ENCODE measurements at regions of chr3 and their contacts with region 1.

Region 1: DNA sequence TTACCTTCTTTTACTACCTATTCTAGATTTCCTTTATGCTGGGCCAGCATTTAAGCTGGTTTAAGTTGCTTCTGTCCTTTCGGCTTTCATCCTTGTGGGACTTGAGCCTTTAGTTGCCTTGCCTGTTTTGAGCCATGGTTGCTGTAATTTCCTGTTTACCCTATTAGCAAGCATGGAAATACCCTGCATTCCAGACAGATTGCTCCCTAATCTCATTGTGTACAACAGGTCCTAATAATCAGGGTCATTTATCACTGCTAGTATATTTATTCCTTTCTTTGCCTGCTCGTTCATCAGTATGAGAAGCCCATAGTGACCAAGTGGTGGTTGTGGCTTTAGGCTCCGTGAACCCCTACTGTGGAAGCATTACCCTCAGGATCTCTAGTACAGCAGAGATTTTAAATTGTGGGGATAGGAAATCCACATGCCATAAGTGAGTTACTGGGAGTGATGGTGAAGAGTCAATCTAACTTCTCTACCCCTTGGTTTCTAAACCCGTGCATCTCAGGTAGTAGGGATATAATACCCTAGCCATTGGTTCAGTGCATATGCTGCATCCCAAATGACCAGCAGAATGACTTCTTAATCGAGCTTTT is 31.9 kb downstream of the NCK1 start:
- DNase-seq: peak; percentile 52
- ATAC-seq: peak; percentile 86
- H3K4me3 ChIP-seq: no peak overlapping the region
- H3K27ac ChIP-seq: peak overlapping the region; percentile 14; the same call in 1 of the 2 replicates
- H3K4me1 ChIP-seq: peaks cover 11% of the 10 kb centered on the region
- H3K27me3 ChIP-seq: no peaks in the 10 kb centered on the region
- CTCF ChIP-seq: no peak

Region 2: GRCh38 chr3:136852180-136852579 is 41.8 kb before region 1 on chr3:
- CTCF ChIA-PET with region 1: no interaction called
- POLR2A ChIA-PET with region 1: interaction called, 10 read pairs
- in situ Hi-C with region 1: no loop called
- intact Hi-C with region 1: no loop called
- DNase-seq: no peak
- ATAC-seq: no peak
- H3K4me3 ChIP-seq: no peak overlapping the region
- H3K27ac ChIP-seq: no peak overlapping the region
- H3K4me1 ChIP-seq: no peaks in the 10 kb centered on the region
- H3K27me3 ChIP-seq: no peaks in the 10 kb centered on the region
- CTCF ChIP-seq: no peak